G401 (cell line): ENCODE measurements at regions of chr2 and their contacts with region 1.

Region 1: DNA sequence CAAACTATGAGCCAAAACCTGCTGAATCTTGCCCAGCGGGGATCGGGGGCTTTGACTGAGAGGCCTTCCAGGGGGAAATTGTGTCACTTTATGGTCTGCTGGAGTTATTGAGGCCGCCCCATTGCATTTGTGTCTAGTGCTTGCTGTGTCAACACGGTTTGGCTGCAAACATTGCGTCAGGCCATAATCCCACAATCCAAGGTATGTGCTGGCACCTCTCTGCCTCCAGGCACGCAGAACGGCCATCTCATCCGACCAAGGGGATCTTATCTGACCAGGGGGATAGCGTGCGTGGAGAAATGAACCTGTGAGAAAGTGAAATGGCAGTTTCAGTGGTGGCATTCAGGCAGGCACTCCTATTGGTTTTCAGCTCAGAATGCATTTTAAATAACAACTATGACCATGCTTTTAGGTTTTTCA is 18.1 kb upstream of the LYPD6B start:
- DNase-seq: no peak

Region 2: GRCh38 chr2:148375214-148375613 is 645.2 kb before region 1 on chr2:
- in situ Hi-C with region 1: no loop called
- DNase-seq: no peak

Region 3: GRCh38 chr2:148971547-148971946 is 48.9 kb before region 1 on chr2:
- in situ Hi-C with region 1: no loop called
- DNase-seq: no peak

Region 4: DNA sequence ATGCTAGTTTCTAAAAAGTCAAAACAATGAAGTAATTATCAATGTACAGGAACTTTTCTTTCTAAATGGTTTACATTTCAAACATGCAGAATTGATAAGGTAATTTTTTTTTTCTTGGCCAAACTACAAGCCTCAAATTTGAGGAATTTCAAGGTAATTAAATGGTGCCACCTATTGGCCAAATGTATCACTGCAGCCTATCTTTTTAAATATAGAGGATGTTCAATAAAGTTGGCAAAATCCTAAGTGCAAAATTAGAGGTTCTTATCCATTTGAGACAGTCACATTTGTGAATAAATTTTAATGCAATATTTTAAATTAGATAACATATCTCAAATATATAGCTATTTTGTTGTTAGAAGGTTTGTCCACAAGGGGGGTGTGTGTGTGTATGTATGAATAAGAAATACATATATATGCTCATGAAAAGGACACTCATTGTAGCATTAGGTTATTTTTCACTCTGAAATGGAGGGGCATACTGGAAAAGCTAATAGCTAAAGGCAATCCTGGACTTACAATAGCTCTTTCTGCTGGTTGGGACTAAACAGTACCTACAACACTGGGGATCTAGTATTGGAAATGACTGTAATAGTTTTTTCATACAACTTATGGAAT is 541.0 kb after region 1 on chr2:
- in situ Hi-C with region 1: loop called (anchors 10 kb)
- DNase-seq: peak; percentile 48